Posterior vena cava (tissue), 2 donors: ENCODE measurements at regions of chr9 and their contacts with region 1.

Region 1: DNA sequence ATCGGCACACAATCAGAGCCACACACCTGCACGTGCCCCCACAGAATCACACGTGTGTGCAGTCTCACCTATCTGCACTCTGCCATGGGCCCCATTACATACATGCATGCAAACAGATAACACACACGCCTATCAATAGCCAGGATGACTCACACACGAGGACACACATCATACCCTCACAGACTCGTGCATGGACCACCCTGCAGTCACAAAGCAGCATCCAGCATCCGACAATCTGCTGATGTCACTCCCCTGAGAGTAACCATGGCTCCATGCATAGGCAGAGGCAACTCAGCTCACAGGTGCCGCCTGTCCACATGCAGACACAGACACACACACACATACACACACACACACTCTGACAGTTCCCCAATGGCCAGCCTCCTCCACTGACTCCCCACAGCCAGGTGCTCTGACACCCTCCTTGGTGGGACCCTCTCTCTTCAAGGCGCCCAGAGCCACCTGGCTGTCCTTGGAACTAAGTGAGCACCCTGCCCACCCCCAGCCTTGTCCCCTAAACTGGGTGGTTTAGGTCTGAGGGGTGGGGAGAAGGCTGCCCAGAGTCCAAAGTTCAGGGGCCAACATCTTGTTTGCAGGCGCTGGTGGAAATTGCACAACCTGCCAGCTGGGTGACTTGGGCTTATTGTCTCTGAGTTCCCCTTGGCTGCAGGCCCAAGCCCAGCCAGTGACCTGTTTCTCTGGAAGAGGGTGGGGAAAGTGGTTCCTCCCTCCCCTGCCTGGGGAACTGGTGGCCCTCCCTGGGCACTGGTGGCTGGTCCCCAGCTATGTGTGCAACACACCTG is 34.6 kb upstream of the NEK6 start:
- DNase-seq: peak; percentile 87

Region 2: DNA sequence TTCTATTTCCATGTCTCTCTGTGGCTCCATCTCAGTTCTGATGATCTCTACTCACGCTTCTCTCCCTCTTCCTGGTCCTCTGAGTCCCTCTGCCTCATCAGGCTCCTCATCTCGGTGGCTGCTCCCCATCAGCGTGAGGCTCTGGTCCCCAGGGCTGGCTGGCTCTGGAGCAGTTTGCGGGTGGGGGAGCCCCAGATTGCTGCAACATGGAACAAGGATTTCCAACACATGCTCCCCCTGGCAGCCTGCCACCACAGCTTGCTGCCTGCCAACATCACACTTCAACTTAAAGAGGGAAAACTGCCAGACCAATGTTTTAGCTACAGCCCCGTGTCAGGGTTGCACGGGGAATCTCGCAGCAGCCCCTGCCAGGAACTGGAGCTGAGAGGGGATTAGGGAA is 42.6 kb before region 1 on chr9:
- intact Hi-C with region 1: loop called in 1 of 2 experiments (anchors 1 kb)
- DNase-seq: peak; percentile 84

Region 3: GRCh38 chr9:125337240-125337639 is 1114.1 kb after region 1 on chr9:
- intact Hi-C with region 1: no loop called
- DNase-seq: no peak

Region 4: DNA sequence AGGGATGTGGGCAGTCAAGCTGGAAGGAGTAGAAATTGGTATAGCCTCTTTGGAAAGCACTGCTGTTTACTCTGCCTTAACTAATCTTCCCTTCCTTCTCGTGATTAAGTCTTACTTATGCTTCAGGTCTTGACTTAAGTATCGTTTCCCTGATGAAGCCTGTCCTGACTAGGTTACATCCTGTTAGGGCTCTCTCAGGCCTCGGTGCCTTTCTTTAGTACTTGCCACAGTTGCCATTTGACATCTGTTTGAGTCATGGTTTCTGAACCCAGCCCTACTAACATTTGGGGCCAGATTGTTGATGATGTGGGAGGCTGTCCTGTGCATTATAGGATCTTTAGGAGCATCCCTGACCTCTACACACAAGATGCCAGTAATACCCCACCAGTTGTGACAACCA is 1132.9 kb after region 1 on chr9:
- intact Hi-C with region 1: no loop called
- DNase-seq: no peak